ENCODE measurements at regions of chr14 and their contacts with region 1.

Region 1: DNA sequence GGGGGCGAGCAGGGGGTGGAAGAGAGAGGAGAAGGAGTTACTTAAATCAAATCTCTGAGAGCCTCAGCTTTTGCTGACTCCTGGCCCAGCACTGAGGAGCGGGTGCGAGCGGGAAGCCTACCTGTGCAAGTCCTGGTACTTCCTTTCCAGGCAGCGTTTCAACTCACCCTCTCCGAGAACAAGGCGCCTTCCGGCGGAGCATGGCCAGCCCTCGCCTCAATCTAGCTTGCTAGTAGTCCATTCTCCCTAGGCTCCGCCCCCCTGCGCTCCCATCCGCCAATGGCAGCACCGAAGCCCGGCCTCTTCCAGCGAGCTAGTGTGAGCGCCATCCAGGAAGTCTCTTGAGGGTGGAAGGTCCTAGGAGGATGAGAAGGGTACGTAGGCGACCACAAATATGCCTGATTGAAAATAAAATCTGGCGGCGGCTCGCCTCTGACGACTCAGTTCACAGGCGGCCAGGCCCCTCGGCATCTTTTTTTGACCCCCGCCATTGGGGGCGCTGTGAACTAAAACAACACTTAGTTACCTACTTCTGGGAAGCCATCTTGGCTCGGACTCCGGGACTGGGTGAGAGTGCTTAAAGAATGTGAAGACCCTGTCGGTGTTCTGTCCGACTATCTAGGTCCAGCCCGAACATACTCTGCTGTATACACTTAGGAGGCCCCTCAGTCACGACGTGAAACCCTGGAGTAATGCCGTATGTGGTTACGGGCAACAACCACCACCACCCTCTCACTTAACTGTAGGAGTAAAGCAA is at the start of gene CHD8:
- DNase-seq: peak; percentile 100
- H3K4me3 ChIP-seq: peak within 1 kb of the TSS; percentile 55 to 59
- H3K27ac ChIP-seq: peak within 1 kb of the TSS; percentile 91 to 94
- H3K4me1 ChIP-seq: peaks cover 5% of the 10 kb centered on the region
- H3K27me3 ChIP-seq: no peaks in the 10 kb centered on the region
- CTCF ChIP-seq: peak; percentile 16 to 72 (median 62)
- POLR2A ChIP-seq: peak; percentile 77
- total RNA-seq, gene CHD8: 63.6 to 67.0 TPM

Region 2: DNA sequence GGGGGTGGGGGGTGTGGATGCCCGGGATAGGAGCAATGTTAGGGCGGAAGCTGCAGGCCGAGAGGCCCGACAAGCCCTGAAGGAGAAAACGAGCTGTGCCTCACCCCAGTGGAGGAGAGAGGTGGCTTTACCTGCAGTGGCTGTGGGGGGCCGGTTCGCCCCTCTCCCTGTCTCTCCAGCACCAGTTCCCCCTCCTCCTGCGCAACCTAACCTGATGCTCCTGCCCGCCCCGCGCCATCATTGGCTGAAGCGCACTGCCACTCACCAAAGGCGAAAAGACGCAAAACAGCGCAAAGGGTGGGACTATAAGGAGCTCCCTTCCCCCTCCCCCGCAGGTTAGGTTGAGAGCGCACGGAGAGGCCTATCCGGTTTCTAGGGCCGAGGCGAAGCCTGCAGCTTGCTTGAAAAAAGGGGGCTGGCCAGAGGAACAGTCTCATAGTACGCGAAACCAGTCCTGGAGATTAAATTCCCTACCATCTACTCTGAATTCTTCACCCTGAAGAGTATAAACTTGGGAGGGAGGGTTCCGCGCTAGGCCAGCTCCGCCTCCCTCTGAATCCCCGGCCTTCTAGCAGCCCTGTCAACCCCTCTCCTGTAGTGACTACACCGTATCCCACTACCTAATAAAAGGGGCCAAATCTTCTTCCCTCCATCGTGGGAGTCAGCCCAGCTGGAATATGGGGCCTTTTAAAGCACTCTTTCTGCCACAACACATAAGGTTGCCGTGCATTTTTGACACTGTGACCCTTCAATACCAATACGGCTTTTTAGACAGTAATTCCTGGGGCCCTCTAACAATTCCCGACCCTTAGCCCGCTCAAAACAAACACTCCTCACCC is 18.8 kb before region 1 on chr14:
- intact Hi-C with region 1: loop called (anchors 1 kb)
- DNase-seq: peak; percentile 98
- H3K4me3 ChIP-seq: peak overlapping the region; percentile 52 to 95
- H3K27ac ChIP-seq: peak overlapping the region; percentile 85 to 91
- H3K4me1 ChIP-seq: no peaks in the 10 kb centered on the region
- H3K27me3 ChIP-seq: no peaks in the 10 kb centered on the region
- CTCF ChIP-seq: no peak
- POLR2A ChIP-seq: peak; percentile 47

Region 3: DNA sequence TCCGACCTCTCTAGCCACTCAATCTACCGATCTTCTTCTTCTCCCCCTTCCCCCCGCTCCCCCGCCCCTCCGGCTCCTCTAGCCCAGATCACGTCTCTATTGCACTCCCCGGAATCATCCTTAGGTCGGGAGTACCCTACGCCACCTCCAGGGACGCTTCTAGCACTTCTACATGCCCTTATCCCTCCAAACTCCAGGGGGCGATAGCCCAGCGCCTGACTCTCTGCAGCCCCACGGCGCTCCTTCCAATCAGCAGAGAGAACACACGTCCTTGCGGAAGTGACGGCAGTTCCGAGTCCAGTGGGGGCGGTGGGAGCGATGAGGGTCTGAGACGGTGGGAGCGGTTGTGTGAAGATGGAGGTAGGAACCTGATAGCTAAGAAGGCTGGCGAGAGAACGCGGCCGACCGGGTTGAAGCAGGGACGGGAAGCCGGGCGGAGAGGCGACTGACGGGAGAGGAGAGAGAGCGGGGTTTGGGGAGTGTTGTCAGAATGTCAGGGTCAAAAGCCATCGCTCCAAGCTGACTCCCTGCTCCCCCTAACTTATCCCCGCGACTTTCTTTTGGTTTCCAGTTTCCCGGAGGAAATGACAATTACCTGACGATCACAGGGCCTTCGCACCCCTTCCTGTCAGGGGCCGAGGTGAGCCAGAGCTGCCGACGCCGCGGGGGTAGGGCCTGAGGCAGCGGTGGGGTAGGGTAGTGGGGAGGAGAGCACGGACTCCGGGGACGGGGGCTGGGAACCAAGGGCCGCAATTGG is 21.0 kb after region 1 on chr14 and contains the starts of genes RAB2B and TOX4:
- intact Hi-C with region 1: loop called (anchors 2 kb)
- DNase-seq: peak; percentile 98
- H3K4me3 ChIP-seq: peak within 1 kb of the TSS; percentile 84 to 86
- H3K27ac ChIP-seq: peak within 1 kb of the TSS; percentile 93 to 95
- H3K4me1 ChIP-seq: no peaks in the 10 kb centered on the region
- H3K27me3 ChIP-seq: no peaks in the 10 kb centered on the region
- CTCF ChIP-seq: peak; percentile 93 to 99 (median 98)
- POLR2A ChIP-seq: peak; percentile 59
- total RNA-seq, gene RAB2B: 25.1 to 35.9 TPM
- total RNA-seq, gene TOX4: 53.2 to 58.2 TPM

Region 4: DNA sequence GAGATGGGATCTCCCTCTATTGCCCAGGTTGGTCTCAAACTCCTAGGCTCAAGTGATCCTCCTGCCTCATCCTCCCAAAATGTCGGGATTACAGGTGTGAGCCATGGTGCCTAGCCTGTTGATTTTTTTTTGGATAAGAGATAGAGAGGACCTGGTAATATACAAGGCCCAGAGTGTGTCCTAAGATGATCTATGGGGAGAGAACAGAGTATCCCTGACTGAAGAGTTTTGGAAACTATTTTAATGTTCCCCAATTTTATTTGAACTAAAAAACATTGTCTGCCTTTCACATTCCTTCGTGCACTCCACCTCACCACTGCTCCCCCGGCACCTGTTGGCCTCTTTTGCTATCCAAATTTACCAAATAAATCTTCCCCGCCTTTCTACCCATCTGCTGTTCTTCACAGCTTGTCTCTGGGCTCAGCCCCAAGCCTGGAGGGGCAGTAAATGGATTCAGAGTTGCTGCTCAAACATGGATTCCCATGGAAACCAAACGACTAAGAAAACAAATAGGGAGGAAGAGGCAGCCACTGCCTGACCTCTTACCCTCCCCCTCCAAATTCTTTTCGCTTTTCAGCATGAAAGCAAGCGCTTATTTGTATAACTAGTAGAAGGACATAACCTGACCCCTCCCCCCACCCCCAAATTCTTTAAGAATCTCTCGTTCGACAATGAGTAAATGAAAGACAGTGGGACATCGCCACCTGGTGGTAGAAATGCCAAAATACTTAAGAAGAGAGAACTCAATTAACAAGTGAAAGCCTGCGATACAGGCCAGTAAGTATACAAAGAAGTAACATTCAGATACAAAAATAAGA is 101.2 kb after region 1 on chr14:
- intact Hi-C with region 1: loop called (anchors 5 kb)
- DNase-seq: peak; percentile 89
- H3K4me3 ChIP-seq: peak overlapping the region; percentile 14 to 23
- H3K27ac ChIP-seq: peak overlapping the region; percentile 66 to 69
- H3K4me1 ChIP-seq: no peaks in the 10 kb centered on the region
- H3K27me3 ChIP-seq: no peaks in the 10 kb centered on the region
- CTCF ChIP-seq: peak; percentile 72 to 90 (median 78)
- POLR2A ChIP-seq: no peak